ENCODE measurements at regions of chr9 and their contacts with region 1.

Region 1: GRCh38 chr9:112819635-112820496 is 69.3 kb downstream of the SNX30 start:
- DNase-seq: peak; percentile 55
- H3K4me3 ChIP-seq: no peak overlapping the region
- H3K27ac ChIP-seq: no peak overlapping the region
- H3K4me1 ChIP-seq: no peaks in the 10 kb centered on the region
- H3K27me3 ChIP-seq: no peaks in the 10 kb centered on the region
- CTCF ChIP-seq: peak; percentile 64 to 77

Region 2: DNA sequence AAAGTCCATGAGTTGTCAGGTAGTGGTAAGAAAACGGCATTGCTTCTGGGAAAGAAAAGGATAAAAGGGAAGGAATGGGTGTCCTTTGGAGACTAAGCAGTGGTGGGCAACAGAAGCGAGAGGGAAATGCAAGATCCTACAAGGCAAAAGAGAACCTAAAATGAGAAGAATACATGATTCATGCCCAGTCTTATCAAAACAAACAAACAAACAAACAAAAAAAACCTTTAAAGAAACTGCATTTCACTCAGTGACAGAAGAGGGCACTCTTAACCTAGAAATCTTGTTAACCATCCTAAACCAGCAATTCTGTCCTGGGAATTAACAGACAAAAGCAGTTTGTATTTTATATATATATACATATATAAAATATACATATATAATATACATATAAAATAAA is 733.2 kb before region 1 on chr9:
- CTCF ChIA-PET with region 1: interaction called, 3 read pairs
- dilution Hi-C with region 1: no loop called
- in situ Hi-C with region 1: no loop called
- intact Hi-C with region 1: loop called (anchors 2 kb)
- DNase-seq: no peak
- H3K4me3 ChIP-seq: no peak overlapping the region
- H3K27ac ChIP-seq: no peak overlapping the region
- H3K4me1 ChIP-seq: no peaks in the 10 kb centered on the region
- H3K27me3 ChIP-seq: no peaks in the 10 kb centered on the region
- CTCF ChIP-seq: peak; percentile 41 to 48

Region 3: GRCh38 chr9:112945620-112946208 is 125.8 kb after region 1 on chr9:
- CTCF ChIA-PET with region 1: no interaction called
- dilution Hi-C with region 1: no loop called
- in situ Hi-C with region 1: no loop called
- intact Hi-C with region 1: no loop called
- DNase-seq: no peak
- H3K4me3 ChIP-seq: no peak overlapping the region
- H3K27ac ChIP-seq: no peak overlapping the region
- H3K4me1 ChIP-seq: no peaks in the 10 kb centered on the region
- H3K27me3 ChIP-seq: no peaks in the 10 kb centered on the region
- CTCF ChIP-seq: no peak

Measured in mammary epithelial cell (primary cell).